ENCODE measurements at regions of chr1 and their contacts with region 1.

Region 1: GRCh38 chr1:184051485-184052193 is at the start of gene TSEN15:
- DNase-seq: peak; percentile 78 to 92 (median 84)
- ATAC-seq: peak; percentile 94
- H3K4me3 ChIP-seq: peak within 1 kb of the TSS; percentile 75
- H3K27ac ChIP-seq: peak within 1 kb of the TSS; percentile 98
- H3K4me1 ChIP-seq: peaks cover 0 to 21% of the 10 kb centered on the region in 2 experiments; a peak in 4 of 5 replicates
- H3K27me3 ChIP-seq: no peaks in the 10 kb centered on the region
- CTCF ChIP-seq: 0 out of 6 replicates have a peak, but pooled peaks of 1 of the 3 experiments have one; percentile 1
- EP300 ChIP-seq: peak; percentile 78
- POLR2A ChIP-seq: peak; percentile 95
- RAD21 ChIP-seq: peak; percentile 29 to 37
- polyA plus RNA-seq, gene TSEN15: 25.6 to 36.1 TPM

Region 2: GRCh38 chr1:183635606-183636333 is 415.9 kb before region 1 on chr1 and contains the start of gene ARPC5:
- CTCF ChIA-PET with region 1: no interaction called
- POLR2A ChIA-PET with region 1: no interaction called
- in situ Hi-C with region 1: no loop called
- intact Hi-C with region 1: loop called (anchors 10 kb)
- DNase-seq: peak; percentile 97 to 99 (median 98)
- ATAC-seq: peak; percentile 96
- H3K4me3 ChIP-seq: peak within 1 kb of the TSS; percentile 77
- H3K27ac ChIP-seq: peak within 1 kb of the TSS; percentile 73
- H3K4me1 ChIP-seq: peaks cover 0 to 15% of the 10 kb centered on the region in 2 experiments; a peak in 4 of 5 replicates
- H3K27me3 ChIP-seq: peaks cover 3 to 7% of the 10 kb centered on the region in 2 experiments; a peak in 2 of 5 replicates
- CTCF ChIP-seq: 0 out of 6 replicates have a peak, but pooled peaks of 1 of the 3 experiments have one; percentile 1
- EP300 ChIP-seq: no peak; the same call in 1 of the 2 replicates
- POLR2A ChIP-seq: peak; percentile 95
- RAD21 ChIP-seq: no peak
- polyA plus RNA-seq, gene ARPC5: 71.8 to 83.9 TPM

Region 3: GRCh38 chr1:183871142-183871541 is 180.5 kb before region 1 on chr1:
- CTCF ChIA-PET with region 1: no interaction called
- POLR2A ChIA-PET with region 1: no interaction called
- in situ Hi-C with region 1: no loop called
- intact Hi-C with region 1: no loop called
- DNase-seq: no peak
- ATAC-seq: no peak
- H3K4me3 ChIP-seq: no peak overlapping the region
- H3K27ac ChIP-seq: no peak overlapping the region
- H3K4me1 ChIP-seq: no peaks in the 10 kb centered on the region
- H3K27me3 ChIP-seq: peaks cover 15 to 20% of the 10 kb centered on the region in 2 experiments; a peak in 4 of 5 replicates
- CTCF ChIP-seq: no peak
- EP300 ChIP-seq: no peak
- POLR2A ChIP-seq: no peak
- RAD21 ChIP-seq: no peak

Region 4: GRCh38 chr1:183912265-183912886 is 139.3 kb before region 1 on chr1:
- CTCF ChIA-PET with region 1: no interaction called
- POLR2A ChIA-PET with region 1: no interaction called
- in situ Hi-C with region 1: no loop called
- intact Hi-C with region 1: no loop called
- DNase-seq: no peak
- ATAC-seq: no peak
- H3K4me3 ChIP-seq: no peak overlapping the region
- H3K27ac ChIP-seq: no peak overlapping the region
- H3K4me1 ChIP-seq: peaks cover 0 to 5% of the 10 kb centered on the region in 2 experiments; a peak in 2 of 5 replicates
- H3K27me3 ChIP-seq: peaks cover 0 to 10% of the 10 kb centered on the region in 2 experiments; a peak in 3 of 5 replicates
- CTCF ChIP-seq: no peak
- EP300 ChIP-seq: no peak
- POLR2A ChIP-seq: no peak
- RAD21 ChIP-seq: no peak

Region 5: GRCh38 chr1:183995322-183996039 is 56.2 kb before region 1 on chr1:
- CTCF ChIA-PET with region 1: no interaction called
- POLR2A ChIA-PET with region 1: interaction called, 4 read pairs
- in situ Hi-C with region 1: no loop called
- intact Hi-C with region 1: loop called (anchors 5 kb)
- DNase-seq: peak in 1 of 4 experiments; percentile 48
- ATAC-seq: peak; percentile 8; the same call in 1 of the 3 replicates
- H3K4me3 ChIP-seq: no peak overlapping the region
- H3K27ac ChIP-seq: peak overlapping the region; percentile 51; the same call in 1 of the 3 replicates
- H3K4me1 ChIP-seq: peaks cover 3 to 54% of the 10 kb centered on the region in 2 experiments; a peak in 4 of 5 replicates
- H3K27me3 ChIP-seq: no peaks in the 10 kb centered on the region
- CTCF ChIP-seq: no peak
- EP300 ChIP-seq: no peak
- POLR2A ChIP-seq: no peak
- RAD21 ChIP-seq: no peak

Region 6: DNA sequence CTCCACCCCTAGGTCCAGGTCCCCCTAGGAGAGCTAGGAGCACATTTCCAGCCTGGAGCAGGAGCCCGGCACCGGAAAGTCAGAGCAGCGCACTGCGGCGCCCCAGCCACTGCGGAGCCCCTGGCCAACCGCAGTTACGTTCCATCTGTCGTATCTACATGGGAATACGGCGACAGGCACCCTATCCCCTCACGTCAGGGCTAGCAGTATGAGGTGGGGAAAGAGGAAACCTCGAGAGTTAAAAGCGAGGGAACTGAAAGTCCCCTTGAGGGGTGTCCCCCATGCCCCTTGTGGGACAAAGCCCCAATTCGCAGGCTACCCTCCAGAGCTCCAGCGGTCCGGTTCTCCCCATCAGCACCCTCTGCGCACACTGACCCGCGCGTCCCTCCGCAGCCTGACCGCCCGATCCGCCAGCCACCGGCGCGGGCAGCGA is 15.1 kb before region 1 on chr1:
- CTCF ChIA-PET with region 1: no interaction called
- POLR2A ChIA-PET with region 1: interaction called, 21 read pairs
- in situ Hi-C with region 1: no loop called
- intact Hi-C with region 1: loop called (anchors 1 kb)
- DNase-seq: peak; percentile 53 to 69 (median 58)
- ATAC-seq: peak; percentile 65
- H3K4me3 ChIP-seq: peak overlapping the region; percentile 65
- H3K27ac ChIP-seq: peak overlapping the region; percentile 82
- H3K4me1 ChIP-seq: peaks cover 24 to 47% of the 10 kb centered on the region in 2 experiments
- H3K27me3 ChIP-seq: no peaks in the 10 kb centered on the region
- CTCF ChIP-seq: no peak; a peak in 1 of 6 replicates
- EP300 ChIP-seq: no peak
- POLR2A ChIP-seq: peak; percentile 51; the same call in 1 of the 2 replicates
- RAD21 ChIP-seq: no peak

Measured in K562 (cell line).